B cell (primary cell): ENCODE measurements at regions of chr3 and their contacts with region 1.

Region 1: DNA sequence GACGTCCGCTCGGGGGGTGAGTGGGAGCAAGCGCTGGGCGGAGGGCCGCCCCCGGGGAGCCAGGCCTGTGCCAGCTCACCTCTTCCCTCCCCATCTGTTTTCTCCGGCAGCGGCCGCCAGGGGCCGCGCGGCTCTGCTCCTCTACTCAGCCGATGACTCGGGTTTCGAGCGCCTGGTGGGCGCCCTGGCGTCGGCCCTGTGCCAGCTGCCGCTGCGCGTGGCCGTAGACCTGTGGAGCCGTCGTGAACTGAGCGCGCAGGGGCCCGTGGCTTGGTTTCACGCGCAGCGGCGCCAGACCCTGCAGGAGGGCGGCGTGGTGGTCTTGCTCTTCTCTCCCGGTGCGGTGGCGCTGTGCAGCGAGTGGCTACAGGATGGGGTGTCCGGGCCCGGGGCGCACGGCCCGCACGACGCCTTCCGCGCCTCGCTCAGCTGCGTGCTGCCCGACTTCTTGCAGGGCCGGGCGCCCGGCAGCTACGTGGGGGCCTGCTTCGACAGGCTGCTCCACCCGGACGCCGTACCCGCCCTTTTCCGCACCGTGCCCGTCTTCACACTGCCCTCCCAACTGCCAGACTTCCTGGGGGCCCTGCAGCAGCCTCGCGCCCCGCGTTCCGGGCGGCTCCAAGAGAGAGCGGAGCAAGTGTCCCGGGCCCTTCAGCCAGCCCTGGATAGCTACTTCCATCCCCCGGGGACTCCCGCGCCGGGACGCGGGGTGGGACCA is 632 bp upstream of the CRELD1 start:
- DNase-seq: peak; percentile 93
- ATAC-seq: peak; percentile 68
- H3K4me3 ChIP-seq: peak overlapping the region in 4 of 5 experiments; percentile 54 to 95 (median 71)
- H3K4me3 Mint-ChIP-seq: peak overlapping the region; percentile 94
- H3K27ac ChIP-seq: peak overlapping the region; percentile 82 to 94
- H3K27ac Mint-ChIP-seq: peak overlapping the region; percentile 98
- H3K4me1 ChIP-seq: peaks cover 22 to 26% of the 10 kb centered on the region in 2 donors
- H3K4me1 Mint-ChIP-seq: peaks cover 39% of the 10 kb centered on the region
- H3K27me3 ChIP-seq: no peaks in the 10 kb centered on the region
- H3K27me3 Mint-ChIP-seq: no peaks in the 10 kb centered on the region
- CTCF ChIP-seq: peak; percentile 85

Region 2: GRCh38 chr3:9765865-9766264 is 167.1 kb before region 1 on chr3:
- CTCF ChIA-PET with region 1: no interaction called
- POLR2A ChIA-PET with region 1: no interaction called
- intact Hi-C with region 1: no loop called
- DNase-seq: no peak
- ATAC-seq: no peak
- H3K4me3 ChIP-seq: no peak overlapping the region
- H3K4me3 Mint-ChIP-seq: no peak overlapping the region
- H3K27ac ChIP-seq: no peak overlapping the region
- H3K27ac Mint-ChIP-seq: no peak overlapping the region
- H3K4me1 ChIP-seq: peaks cover 17 to 18% of the 10 kb centered on the region in 2 donors
- H3K4me1 Mint-ChIP-seq: peaks cover 20% of the 10 kb centered on the region
- H3K27me3 ChIP-seq: peaks cover 0 to 12% (median 2%) of the 10 kb centered on the region in 4 experiments
- H3K27me3 Mint-ChIP-seq: peaks cover 5% of the 10 kb centered on the region
- CTCF ChIP-seq: no peak

Region 3: GRCh38 chr3:9792405-9793160 is 140.4 kb before region 1 on chr3 and contains the starts of genes ARPC4 and TADA3:
- CTCF ChIA-PET with region 1: interaction called, 5 read pairs
- POLR2A ChIA-PET with region 1: interaction called, 12 read pairs
- intact Hi-C with region 1: loop called (anchors 1 kb)
- DNase-seq: peak; percentile 99
- ATAC-seq: peak; percentile 77
- H3K4me3 ChIP-seq: peak within 1 kb of the TSS; percentile 78 to 99 (median 94)
- H3K4me3 Mint-ChIP-seq: peak within 1 kb of the TSS; percentile 99
- H3K27ac ChIP-seq: peak within 1 kb of the TSS; percentile 93 to 99
- H3K27ac Mint-ChIP-seq: peak within 1 kb of the TSS; percentile 100
- H3K4me1 ChIP-seq: peaks cover 51 to 63% of the 10 kb centered on the region in 2 donors
- H3K4me1 Mint-ChIP-seq: peaks cover 57% of the 10 kb centered on the region
- H3K27me3 ChIP-seq: no peaks in the 10 kb centered on the region
- H3K27me3 Mint-ChIP-seq: no peaks in the 10 kb centered on the region
- CTCF ChIP-seq: no peak
- total RNA-seq, gene ARPC4: 174 and 179 TPM in 2 replicates
- total RNA-seq, gene TADA3: 43.4 and 45.6 TPM in 2 replicates

Region 4: DNA sequence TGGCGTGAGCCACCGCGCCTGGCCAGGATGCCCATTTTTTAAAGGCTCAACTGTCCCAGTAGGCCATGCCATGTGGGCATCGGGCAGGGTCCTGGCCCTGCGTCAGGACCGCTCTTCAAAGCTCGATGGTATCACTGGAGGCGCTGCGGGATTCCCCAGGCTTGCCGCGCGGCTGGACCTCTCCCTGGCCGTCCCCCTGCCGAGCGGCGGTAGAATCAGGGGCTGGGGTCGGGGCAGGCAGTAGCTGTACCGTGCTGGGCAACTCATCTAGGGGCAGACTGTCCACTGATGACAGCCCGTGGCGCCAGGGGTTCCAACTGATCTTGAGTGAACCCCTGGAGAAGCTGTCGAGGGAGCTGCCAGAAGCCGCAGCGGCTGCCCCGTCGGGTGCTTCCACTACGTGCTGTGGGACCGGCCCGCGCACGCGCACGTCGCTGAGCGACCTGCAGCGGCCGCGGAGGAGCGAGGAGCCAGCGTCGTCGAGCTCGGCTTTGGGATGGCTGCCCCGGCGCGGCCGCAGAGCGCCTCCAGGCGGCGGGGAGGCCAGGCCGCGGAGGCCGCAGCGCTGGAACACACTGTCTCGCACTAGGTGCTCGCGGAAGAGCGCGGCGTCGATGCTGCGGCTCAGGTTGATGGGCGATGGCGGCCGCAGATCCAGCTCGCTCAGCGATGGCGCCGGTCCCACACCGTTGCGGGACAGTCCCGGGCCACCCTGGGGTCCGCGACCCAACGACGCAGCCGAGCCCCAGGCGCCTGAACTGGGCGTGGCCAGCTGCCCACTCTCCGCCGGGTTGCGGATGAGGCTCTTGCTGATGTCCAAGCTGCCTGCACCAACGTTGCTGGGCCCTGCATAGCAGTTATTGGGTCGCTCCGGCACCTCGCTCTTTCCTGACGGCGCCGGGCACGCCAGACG is 13.4 kb after region 1 on chr3:
- CTCF ChIA-PET with region 1: interaction called, 47 read pairs
- POLR2A ChIA-PET with region 1: interaction called, 11 read pairs
- intact Hi-C with region 1: loop called (anchors 1 kb)
- DNase-seq: peak; percentile 79
- ATAC-seq: peak; percentile 92
- H3K4me3 ChIP-seq: peak overlapping the region in 3 of 5 experiments; percentile 27 to 51 (median 50)
- H3K4me3 Mint-ChIP-seq: peak overlapping the region; percentile 89
- H3K27ac ChIP-seq: no peak overlapping the region
- H3K27ac Mint-ChIP-seq: peak overlapping the region; percentile 85
- H3K4me1 ChIP-seq: peaks cover 6 to 13% of the 10 kb centered on the region in 2 donors
- H3K4me1 Mint-ChIP-seq: peaks cover 11% of the 10 kb centered on the region
- H3K27me3 ChIP-seq: peaks cover 0 to 4% (median 0%) of the 10 kb centered on the region in 4 experiments
- H3K27me3 Mint-ChIP-seq: no peaks in the 10 kb centered on the region
- CTCF ChIP-seq: peak; percentile 69

Region 5: GRCh38 chr3:10010486-10011465 is 77.8 kb after region 1 on chr3:
- CTCF ChIA-PET with region 1: no interaction called
- POLR2A ChIA-PET with region 1: interaction called, 9 read pairs
- intact Hi-C with region 1: loop called (anchors 1 kb)
- DNase-seq: peak; percentile 86
- ATAC-seq: peak; percentile 86
- H3K4me3 ChIP-seq: peak overlapping the region in 4 of 5 experiments; percentile 46 to 64 (median 57)
- H3K4me3 Mint-ChIP-seq: peak overlapping the region; percentile 85
- H3K27ac ChIP-seq: no peak overlapping the region
- H3K27ac Mint-ChIP-seq: no peak overlapping the region
- H3K4me1 ChIP-seq: peaks cover 14 to 29% of the 10 kb centered on the region in 2 donors
- H3K4me1 Mint-ChIP-seq: peaks cover 20% of the 10 kb centered on the region
- H3K27me3 ChIP-seq: no peaks in the 10 kb centered on the region
- H3K27me3 Mint-ChIP-seq: no peaks in the 10 kb centered on the region
- CTCF ChIP-seq: no peak

Region 6: GRCh38 chr3:10224784-10225665 is 292.0 kb after region 1 on chr3:
- CTCF ChIA-PET with region 1: interaction called, 3 read pairs
- POLR2A ChIA-PET with region 1: no interaction called
- intact Hi-C with region 1: loop called (anchors 2 kb)
- DNase-seq: peak; percentile 79
- ATAC-seq: peak; percentile 46
- H3K4me3 ChIP-seq: no peak overlapping the region
- H3K4me3 Mint-ChIP-seq: peak overlapping the region; percentile 67
- H3K27ac ChIP-seq: peak overlapping the region in 1 of 2 donors; percentile 1
- H3K27ac Mint-ChIP-seq: peak overlapping the region; percentile 83
- H3K4me1 ChIP-seq: peaks cover 40 to 66% of the 10 kb centered on the region in 2 donors
- H3K4me1 Mint-ChIP-seq: peaks cover 63% of the 10 kb centered on the region
- H3K27me3 ChIP-seq: no peaks in the 10 kb centered on the region
- H3K27me3 Mint-ChIP-seq: no peaks in the 10 kb centered on the region
- CTCF ChIP-seq: peak; percentile 83